ENCODE measurements at regions of chr19 and their contacts with region 1.

Region 1: DNA sequence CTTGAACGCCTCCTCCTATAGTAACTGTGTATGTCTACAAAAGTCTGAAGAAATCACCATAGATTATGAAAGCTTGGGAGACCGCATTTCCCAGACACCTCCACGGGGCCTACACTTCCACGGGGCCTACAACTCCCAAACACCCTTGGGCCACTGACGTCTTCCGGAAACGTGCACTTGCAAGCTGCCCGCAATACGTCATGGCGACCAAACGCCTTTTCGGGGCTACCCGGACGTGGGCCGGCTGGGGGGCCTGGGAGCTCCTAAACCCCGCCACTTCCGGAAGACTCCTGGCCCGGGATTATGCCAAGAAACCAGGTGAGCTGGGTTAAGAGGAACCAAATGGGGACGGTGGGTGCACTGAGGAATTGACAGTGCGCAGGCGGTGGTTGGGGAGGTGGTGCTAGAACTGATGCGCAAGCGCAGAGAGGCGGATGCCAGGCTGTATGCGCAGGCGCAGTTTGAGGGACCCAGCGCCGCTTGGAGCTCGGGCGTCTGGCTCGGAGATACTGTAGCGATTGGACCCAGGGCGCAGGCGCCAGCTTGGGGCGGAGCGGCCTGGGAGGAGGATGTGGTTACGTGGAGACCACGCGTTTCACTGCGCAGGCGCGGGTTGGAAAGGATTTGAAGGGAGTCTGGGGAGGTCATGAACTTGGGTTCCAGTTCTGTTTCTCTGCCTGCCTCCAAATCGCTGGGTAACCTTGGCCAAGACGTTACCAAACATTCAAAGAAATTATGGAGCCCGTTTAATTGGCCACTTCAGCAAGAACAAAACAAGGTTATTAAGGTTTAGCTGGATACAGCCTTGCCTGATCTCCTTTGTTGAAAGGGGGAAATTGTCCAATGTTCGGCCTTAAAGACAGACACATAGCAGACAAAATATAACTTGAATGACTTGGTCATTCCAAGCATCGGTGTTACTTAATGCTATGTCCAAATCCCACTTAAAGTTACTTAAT is at the start of gene MRPL54:
- DNase-seq: peak; percentile 99 to 100
- ATAC-seq: peak; percentile 94 to 98 (median 96)
- H3K4me3 ChIP-seq: peak within 1 kb of the TSS; percentile 68 to 99 (median 91)
- H3K27ac ChIP-seq: peak within 1 kb of the TSS; percentile 95 to 100 (median 97)
- H3K4me1 ChIP-seq: peaks cover 3 to 48% (median 35%) of the 10 kb centered on the region in 9 donors
- H3K27me3 ChIP-seq: no peaks in the 10 kb centered on the region
- CTCF ChIP-seq: no peak
- total RNA-seq, gene MRPL54: 61.4 to 93.4 (median 67.0) TPM

Region 2: DNA sequence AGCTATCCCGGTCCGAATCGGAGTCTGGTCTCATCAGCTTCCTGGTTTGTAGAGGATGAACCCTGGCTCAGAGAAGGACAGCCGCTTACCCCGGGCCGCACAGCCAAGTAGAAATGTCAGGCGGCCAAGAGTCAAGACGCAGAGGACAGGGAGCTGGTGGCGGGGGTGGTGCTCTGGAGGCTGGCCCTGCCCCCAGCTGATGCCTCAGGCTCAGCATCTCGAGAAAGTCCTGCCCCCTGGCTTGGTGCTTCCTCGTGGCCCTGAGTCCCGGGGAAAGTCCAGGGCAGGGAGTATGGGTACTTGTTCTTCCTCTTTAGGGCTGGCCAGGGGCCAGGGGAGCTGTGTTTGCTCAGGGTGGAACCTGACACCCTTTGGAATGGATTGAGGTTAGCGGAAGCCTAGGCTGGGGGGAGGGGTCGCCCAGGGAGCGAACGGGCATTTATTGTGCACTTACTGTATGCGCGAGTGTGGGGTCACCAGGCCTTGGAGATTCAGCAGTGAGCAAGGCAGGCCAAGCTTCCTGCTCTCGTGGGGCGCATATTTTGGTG is 52.4 kb before region 1 on chr19:
- intact Hi-C with region 1: no loop called
- DNase-seq: peak; percentile 58 to 73
- ATAC-seq: peak; percentile 41 to 81 (median 55)
- H3K4me3 ChIP-seq: no peak overlapping the region
- H3K27ac ChIP-seq: no peak overlapping the region
- H3K4me1 ChIP-seq: peaks cover 0 to 13% (median 6%) of the 10 kb centered on the region in 9 donors
- H3K27me3 ChIP-seq: peaks cover 0 to 17% (median 12%) of the 10 kb centered on the region in 7 donors
- CTCF ChIP-seq: no peak

Region 3: GRCh38 chr19:3821857-3822364 is 59.1 kb after region 1 on chr19:
- intact Hi-C with region 1: loop called in 5 of 10 experiments (anchors 5 to 10 kb)
- DNase-seq: peak; percentile 38 to 76
- ATAC-seq: peak; percentile 68 to 85 (median 78)
- H3K4me3 ChIP-seq: no peak overlapping the region
- H3K27ac ChIP-seq: no peak overlapping the region
- H3K4me1 ChIP-seq: peaks cover 0 to 17% (median 5%) of the 10 kb centered on the region in 9 donors
- H3K27me3 ChIP-seq: peaks cover 0 to 14% (median 0%) of the 10 kb centered on the region in 7 donors
- CTCF ChIP-seq: peak; percentile 97 to 100 (median 99)

Region 4: GRCh38 chr19:3950871-3951861 is 188.4 kb after region 1 on chr19:
- intact Hi-C with region 1: loop called in 1 of 10 experiments (anchors 10 kb)
- DNase-seq: peak; percentile 64 to 76
- ATAC-seq: peak; percentile 26 to 84 (median 76)
- H3K4me3 ChIP-seq: peak overlapping the region; percentile 27 to 60 (median 48)
- H3K27ac ChIP-seq: peak overlapping the region; percentile 68 to 98 (median 93)
- H3K4me1 ChIP-seq: peaks cover 6 to 55% (median 34%) of the 10 kb centered on the region in 9 donors
- H3K27me3 ChIP-seq: no peaks in the 10 kb centered on the region
- CTCF ChIP-seq: no peak

Region 5: GRCh38 chr19:3970808-3971598 is 208.2 kb after region 1 on chr19 and contains the start of gene DAPK3:
- intact Hi-C with region 1: loop called in 2 of 10 experiments (anchors 5 to 10 kb)
- DNase-seq: peak; percentile 98
- ATAC-seq: peak; percentile 77 to 88 (median 86)
- H3K4me3 ChIP-seq: peak within 1 kb of the TSS; percentile 77 to 99 (median 96)
- H3K27ac ChIP-seq: peak within 1 kb of the TSS; percentile 93 to 100 (median 98)
- H3K4me1 ChIP-seq: peaks cover 24 to 48% (median 46%) of the 10 kb centered on the region in 9 donors
- H3K27me3 ChIP-seq: no peaks in the 10 kb centered on the region
- CTCF ChIP-seq: peak in 4 of 9 donors; percentile 10 to 32 (median 15)
- total RNA-seq, gene DAPK3: 72.5 to 222 (median 99.5) TPM